Right ventricle myocardium inferior (tissue), 1 donor: ENCODE measurements at regions of chr3 and their contacts with region 1.

Region 1: DNA sequence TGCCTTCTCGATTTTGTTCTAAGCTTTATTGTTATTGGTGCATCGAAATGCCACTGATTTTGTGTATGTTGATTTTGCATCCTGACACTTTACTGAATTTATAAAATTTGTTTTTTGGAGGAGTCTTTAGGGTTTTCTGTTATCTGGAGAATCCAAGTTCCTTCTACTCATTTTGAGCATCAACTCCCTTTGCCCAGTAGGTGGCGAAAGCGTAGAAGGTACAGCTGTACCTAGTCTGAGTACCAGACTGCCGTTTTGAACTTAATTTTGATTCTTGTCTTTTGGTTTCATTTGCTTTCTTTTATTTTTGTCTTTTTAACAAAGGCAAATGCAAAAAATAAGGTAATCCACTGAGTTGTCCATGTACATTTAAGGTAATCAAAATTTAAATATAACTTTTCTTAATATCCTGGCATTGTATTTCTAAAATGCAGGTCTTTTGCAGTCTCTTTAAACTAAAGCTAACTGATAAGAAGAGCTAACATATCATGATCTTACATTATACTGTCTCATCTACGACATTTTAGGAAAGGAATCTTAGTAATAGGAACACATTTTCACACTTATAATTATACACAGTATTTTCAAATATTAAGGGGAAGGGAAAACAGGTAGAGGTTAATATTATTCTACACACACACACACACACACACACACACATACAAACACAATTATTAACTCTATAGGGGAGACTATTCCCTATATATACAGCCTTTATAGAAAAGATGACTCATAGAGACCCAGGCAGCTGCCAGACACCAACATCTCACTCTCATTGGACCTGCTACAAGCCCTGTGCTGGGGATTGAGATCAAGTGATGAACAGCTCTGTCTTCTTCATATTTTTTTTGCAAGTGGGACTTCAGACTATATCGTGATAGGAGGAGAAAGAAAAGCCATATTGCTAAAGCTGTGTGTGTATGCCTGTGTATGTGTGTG is 71.7 kb downstream of the SYNPR start:
- DNase-seq: no peak
- ATAC-seq: no peak

Region 2: GRCh38 chr3:62940771-62941563 is 408.9 kb before region 1 on chr3:
- intact Hi-C with region 1: no loop called
- DNase-seq: no peak
- ATAC-seq: no peak

Region 3: GRCh38 chr3:63818281-63819150 is 468.7 kb after region 1 on chr3:
- intact Hi-C with region 1: loop called (anchors 1 kb)
- DNase-seq: no peak
- ATAC-seq: no peak

Region 4: DNA sequence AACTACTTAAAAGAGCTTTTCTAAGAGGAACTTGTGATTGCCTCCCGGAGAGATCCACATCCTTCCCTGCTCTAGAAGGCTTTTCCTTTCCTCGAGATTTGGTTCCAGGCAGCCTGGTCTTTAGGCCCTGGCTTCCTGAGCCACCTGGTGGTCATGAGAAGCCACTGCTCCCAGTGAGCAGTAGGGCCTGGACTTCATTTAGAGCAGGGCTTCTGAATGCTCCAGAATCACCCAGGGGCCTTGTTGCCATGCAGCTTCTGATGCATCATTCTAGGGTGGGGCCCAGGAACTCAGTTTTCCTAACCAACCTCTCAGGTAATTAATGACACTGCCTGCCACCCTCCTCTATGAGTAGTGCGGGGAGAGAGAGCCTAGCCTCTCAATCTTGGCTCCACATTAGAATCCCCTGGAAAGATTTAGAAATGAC is 643.8 kb after region 1 on chr3:
- intact Hi-C with region 1: loop called (anchors 5 kb)
- DNase-seq: peak; percentile 70
- ATAC-seq: peak; percentile 88

Region 5: GRCh38 chr3:64484289-64484992 is 1134.6 kb after region 1 on chr3:
- intact Hi-C with region 1: loop called (anchors 10 kb)
- DNase-seq: no peak
- ATAC-seq: peak; percentile 94